Adrenal gland (tissue), 19 donors: ENCODE measurements at regions of chr3 and their contacts with region 1.

Region 1: GRCh38 chr3:149657926-149658733 is at the start of gene WWTR1:
- DNase-seq: peak; percentile 91 to 97 (median 95)
- H3K4me3 ChIP-seq: peak within 1 kb of the TSS; percentile 31 to 85 (median 61)
- H3K27ac ChIP-seq: peak within 1 kb of the TSS; percentile 84 to 98 (median 90)
- H3K4me1 ChIP-seq: peaks cover 13 to 42% of the 10 kb centered on the region in 2 donors
- H3K27me3 ChIP-seq: no peaks in the 10 kb centered on the region
- CTCF ChIP-seq: peak in 3 of 6 experiments; percentile 7 to 19 (median 18)
- POLR2A ChIP-seq: peak; percentile 58 to 98
- total RNA-seq, gene WWTR1: 26.7 to 56.2 (median 41.2) TPM

Region 2: GRCh38 chr3:149596136-149596770 is 61.9 kb before region 1 on chr3:
- intact Hi-C with region 1: loop called in 1 of 2 experiments (anchors 10 kb)
- DNase-seq: peak; percentile 41 to 65 (median 55)
- H3K4me3 ChIP-seq: no peak overlapping the region
- H3K27ac ChIP-seq: peak overlapping the region in 3 of 5 donors; percentile 44 to 70 (median 64)
- H3K4me1 ChIP-seq: peaks cover 0 to 23% of the 10 kb centered on the region in 2 donors
- H3K27me3 ChIP-seq: no peaks in the 10 kb centered on the region
- CTCF ChIP-seq: no peak
- POLR2A ChIP-seq: no peak

Region 3: GRCh38 chr3:149609595-149609994 is 48.5 kb before region 1 on chr3:
- intact Hi-C with region 1: no loop called
- DNase-seq: no peak
- H3K4me3 ChIP-seq: no peak overlapping the region
- H3K27ac ChIP-seq: no peak overlapping the region
- H3K4me1 ChIP-seq: peaks cover 0 to 14% of the 10 kb centered on the region in 2 donors
- H3K27me3 ChIP-seq: no peaks in the 10 kb centered on the region
- CTCF ChIP-seq: no peak
- POLR2A ChIP-seq: no peak

Region 4: DNA sequence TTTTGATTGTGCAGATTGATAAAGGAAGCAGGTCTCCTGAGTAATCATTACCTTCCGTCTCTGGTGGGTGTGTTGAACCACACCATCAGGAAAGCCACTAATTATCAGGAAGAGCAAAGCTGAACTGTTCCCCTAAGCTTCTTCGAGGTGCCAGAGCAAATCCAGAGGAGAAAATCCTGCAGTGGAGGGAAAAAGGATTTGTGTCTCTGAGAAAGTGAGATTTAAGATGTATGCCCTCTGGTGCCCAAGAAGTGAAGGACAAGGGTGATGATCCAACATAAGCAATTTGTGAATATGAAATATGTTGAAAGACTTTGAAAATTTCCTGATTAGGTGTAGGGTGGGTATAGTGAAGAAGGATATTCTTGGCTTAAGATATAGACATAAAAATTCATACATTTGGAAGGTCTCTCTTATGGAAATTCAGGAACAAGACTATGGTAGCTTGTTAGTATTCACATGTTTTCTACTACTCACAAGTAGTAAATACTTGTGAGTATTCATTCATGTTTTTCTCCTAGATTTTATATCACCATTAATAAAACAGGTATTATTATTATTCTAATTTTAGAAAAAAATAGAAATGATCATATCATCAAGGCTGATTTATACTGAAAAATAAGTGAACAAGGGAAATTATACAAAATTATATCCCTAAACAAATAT is 59.4 kb after region 1 on chr3:
- intact Hi-C with region 1: loop called (anchors 10 kb)
- DNase-seq: peak; percentile 45 to 86 (median 60)
- H3K4me3 ChIP-seq: peak overlapping the region in 2 of 4 donors; percentile 6 to 42
- H3K27ac ChIP-seq: no peak overlapping the region
- H3K4me1 ChIP-seq: peaks cover 0 to 3% of the 10 kb centered on the region in 2 donors
- H3K27me3 ChIP-seq: no peaks in the 10 kb centered on the region
- CTCF ChIP-seq: peak; percentile 50 to 92 (median 82)
- POLR2A ChIP-seq: no peak

Region 5: GRCh38 chr3:149879872-149880271 is 221.7 kb after region 1 on chr3:
- intact Hi-C with region 1: no loop called
- DNase-seq: peak; percentile 64 to 89 (median 73)
- H3K4me3 ChIP-seq: no peak overlapping the region
- H3K27ac ChIP-seq: no peak overlapping the region
- H3K4me1 ChIP-seq: no peaks in the 10 kb centered on the region
- H3K27me3 ChIP-seq: no peaks in the 10 kb centered on the region
- CTCF ChIP-seq: peak; percentile 37 to 68 (median 58)
- POLR2A ChIP-seq: no peak